ENCODE measurements at regions of chr1 and their contacts with region 1.

Region 1: GRCh38 chr1:62687903-62688686 is at the start of gene DOCK7:
- DNase-seq: peak; percentile 82
- H3K4me3 Mint-ChIP-seq: peak within 1 kb of the TSS; percentile 91
- H3K27ac Mint-ChIP-seq: peak within 1 kb of the TSS; percentile 70
- H3K4me1 Mint-ChIP-seq: peaks cover 34% of the 10 kb centered on the region
- H3K27me3 Mint-ChIP-seq: no peaks in the 10 kb centered on the region
- CTCF ChIP-seq: no peak
- total RNA-seq, gene DOCK7: 46.9 and 49.7 TPM in 2 replicates

Region 2: GRCh38 chr1:62493656-62494055 is 194.4 kb before region 1 on chr1:
- CTCF ChIA-PET with region 1: no interaction called
- POLR2A ChIA-PET with region 1: no interaction called
- intact Hi-C with region 1: no loop called
- DNase-seq: no peak
- H3K4me3 Mint-ChIP-seq: no peak overlapping the region
- H3K27ac Mint-ChIP-seq: no peak overlapping the region
- H3K4me1 Mint-ChIP-seq: no peaks in the 10 kb centered on the region
- H3K27me3 Mint-ChIP-seq: no peaks in the 10 kb centered on the region
- CTCF ChIP-seq: no peak

Region 3: DNA sequence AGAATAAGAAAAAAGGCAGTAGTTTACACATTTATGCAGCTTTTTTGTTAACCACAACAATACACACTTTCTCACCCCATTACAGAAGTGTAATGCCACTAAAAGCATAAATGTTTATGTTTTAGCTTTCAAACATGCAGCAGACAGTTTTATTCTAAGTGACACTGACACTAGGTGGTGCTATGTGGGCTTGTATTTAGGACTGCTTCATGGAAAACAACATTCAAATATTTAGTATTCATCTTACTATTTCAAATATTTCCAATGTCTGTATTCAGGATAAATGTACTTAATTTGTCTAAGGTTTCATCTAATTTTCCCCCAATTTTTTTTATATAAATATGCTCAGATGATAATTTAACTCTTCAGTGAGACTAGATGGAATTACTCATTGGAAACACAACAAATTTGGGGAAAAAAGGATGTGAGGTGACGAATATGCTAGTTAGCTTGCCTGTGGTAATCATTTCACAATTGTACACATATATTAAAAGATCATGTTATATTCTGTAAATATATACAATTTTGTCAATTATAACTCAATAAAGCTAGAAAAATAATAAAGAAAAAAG is 179.8 kb before region 1 on chr1:
- CTCF ChIA-PET with region 1: interaction called, 4 read pairs
- POLR2A ChIA-PET with region 1: no interaction called
- intact Hi-C with region 1: loop called (anchors 5 kb)
- DNase-seq: peak; percentile 58
- H3K4me3 Mint-ChIP-seq: no peak overlapping the region
- H3K27ac Mint-ChIP-seq: no peak overlapping the region
- H3K4me1 Mint-ChIP-seq: no peaks in the 10 kb centered on the region
- H3K27me3 Mint-ChIP-seq: no peaks in the 10 kb centered on the region
- CTCF ChIP-seq: peak; percentile 46

Region 4: DNA sequence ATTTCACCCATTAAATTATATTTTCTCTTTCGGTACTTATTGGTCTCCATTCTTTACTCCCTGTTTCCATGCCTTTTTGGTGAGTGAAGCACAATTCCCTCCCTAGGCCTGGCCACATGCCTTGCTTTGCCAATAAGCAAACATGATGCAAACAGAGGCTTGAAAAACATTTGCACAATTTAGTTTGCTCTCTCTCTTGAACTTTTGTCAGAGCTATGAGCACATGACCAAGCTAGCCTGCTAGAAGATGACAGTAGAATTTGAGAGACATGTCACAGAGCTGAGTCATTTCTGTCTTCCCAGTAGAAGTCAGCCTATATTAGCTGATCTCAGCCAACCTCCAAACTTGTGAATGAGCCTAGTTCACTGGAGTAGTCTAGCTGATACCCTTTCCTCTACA is 66.2 kb before region 1 on chr1:
- CTCF ChIA-PET with region 1: no interaction called
- POLR2A ChIA-PET with region 1: interaction called, 5 read pairs
- intact Hi-C with region 1: loop called (anchors 10 kb)
- DNase-seq: peak; percentile 91
- H3K4me3 Mint-ChIP-seq: no peak overlapping the region
- H3K27ac Mint-ChIP-seq: peak overlapping the region; percentile 79
- H3K4me1 Mint-ChIP-seq: peaks cover 10% of the 10 kb centered on the region
- H3K27me3 Mint-ChIP-seq: no peaks in the 10 kb centered on the region
- CTCF ChIP-seq: no peak

Region 5: GRCh38 chr1:62977366-62977765 is 289.3 kb after region 1 on chr1:
- CTCF ChIA-PET with region 1: no interaction called
- POLR2A ChIA-PET with region 1: no interaction called
- intact Hi-C with region 1: no loop called
- DNase-seq: no peak
- H3K4me3 Mint-ChIP-seq: no peak overlapping the region
- H3K27ac Mint-ChIP-seq: no peak overlapping the region
- H3K4me1 Mint-ChIP-seq: no peaks in the 10 kb centered on the region
- H3K27me3 Mint-ChIP-seq: peaks cover 23% of the 10 kb centered on the region
- CTCF ChIP-seq: no peak

Region 6: GRCh38 chr1:63522891-63523728 is 835.0 kb after region 1 on chr1 and contains the starts of genes EFCAB7 and ITGB3BP:
- CTCF ChIA-PET with region 1: no interaction called
- POLR2A ChIA-PET with region 1: no interaction called
- intact Hi-C with region 1: no loop called
- DNase-seq: peak; percentile 95
- H3K4me3 Mint-ChIP-seq: peak within 1 kb of the TSS; percentile 93
- H3K27ac Mint-ChIP-seq: peak within 1 kb of the TSS; percentile 94
- H3K4me1 Mint-ChIP-seq: peaks cover 26% of the 10 kb centered on the region
- H3K27me3 Mint-ChIP-seq: no peaks in the 10 kb centered on the region
- CTCF ChIP-seq: no peak
- total RNA-seq, gene EFCAB7: 7.6 and 7.9 TPM in 2 replicates
- total RNA-seq, gene ITGB3BP: 31.4 and 31.8 TPM in 2 replicates

Measured in MCF 10A (cell line).